GM13977 (cell line): ENCODE measurements at regions of chr12 and their contacts with region 1.

Region 1: GRCh38 chr12:76455582-76456345 is 103.8 kb downstream of the OSBPL8 start:
- DNase-seq: peak; percentile 47
- CTCF ChIP-seq: peak; percentile 64

Region 2: GRCh38 chr12:75511116-75512048 is 944.4 kb before region 1 on chr12 and contains the start of gene KRR1:
- in situ Hi-C with region 1: loop called (anchors 25 kb)
- DNase-seq: peak; percentile 49
- CTCF ChIP-seq: no peak

Region 3: DNA sequence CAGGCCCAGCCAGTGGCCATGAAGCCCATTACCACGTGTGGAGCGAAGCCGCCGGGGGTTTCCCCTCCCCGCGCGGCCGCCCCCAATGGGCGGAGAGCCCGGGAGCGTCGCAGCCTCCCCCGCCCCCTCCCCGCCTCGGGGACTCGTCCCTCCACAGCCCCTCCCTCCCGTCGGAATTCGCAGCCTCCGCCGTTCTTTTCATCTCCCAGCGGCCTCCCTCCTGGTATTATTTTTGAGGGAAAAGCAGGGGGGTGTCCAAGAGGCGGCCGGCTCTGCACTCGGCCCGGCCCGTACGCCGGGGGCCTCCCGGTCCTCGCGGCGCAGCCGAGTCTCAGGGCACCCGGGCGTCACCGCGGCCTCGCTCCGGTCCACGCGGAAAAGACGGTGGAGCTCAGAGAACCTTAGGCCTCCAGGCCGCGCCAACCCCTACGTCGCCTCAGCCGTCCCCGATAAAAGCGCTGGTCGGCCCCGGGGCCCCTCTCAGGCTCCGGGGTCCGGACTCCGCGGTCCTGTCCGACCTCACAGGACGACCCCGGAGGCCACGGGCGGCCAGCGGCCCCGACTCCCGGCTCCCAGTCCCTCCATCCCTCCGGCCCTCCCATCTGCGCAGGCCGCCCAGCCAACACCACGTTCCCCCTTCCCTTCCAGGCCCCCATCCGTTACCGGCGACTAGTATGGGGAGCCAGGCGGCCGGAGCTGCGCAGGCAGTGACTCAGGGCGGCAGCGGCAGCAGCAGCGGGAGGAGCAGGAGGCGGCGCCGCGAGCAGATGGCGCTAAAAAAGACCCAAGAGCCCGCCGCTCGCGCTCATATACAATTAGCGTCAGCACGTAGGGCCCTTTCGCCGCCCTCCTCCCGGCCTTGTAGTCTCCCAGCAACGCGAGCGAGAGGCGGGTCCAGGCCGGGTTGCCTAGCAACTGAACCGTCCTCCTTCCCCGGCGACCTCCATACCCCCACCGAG is 371.6 kb before region 1 on chr12 and contains the start of gene NAP1L1:
- in situ Hi-C with region 1: loop called (anchors 25 kb)
- DNase-seq: peak; percentile 98
- CTCF ChIP-seq: no peak

Region 4: GRCh38 chr12:76337583-76337982 is 118.2 kb before region 1 on chr12:
- in situ Hi-C with region 1: no loop called
- DNase-seq: no peak
- CTCF ChIP-seq: no peak

Region 5: DNA sequence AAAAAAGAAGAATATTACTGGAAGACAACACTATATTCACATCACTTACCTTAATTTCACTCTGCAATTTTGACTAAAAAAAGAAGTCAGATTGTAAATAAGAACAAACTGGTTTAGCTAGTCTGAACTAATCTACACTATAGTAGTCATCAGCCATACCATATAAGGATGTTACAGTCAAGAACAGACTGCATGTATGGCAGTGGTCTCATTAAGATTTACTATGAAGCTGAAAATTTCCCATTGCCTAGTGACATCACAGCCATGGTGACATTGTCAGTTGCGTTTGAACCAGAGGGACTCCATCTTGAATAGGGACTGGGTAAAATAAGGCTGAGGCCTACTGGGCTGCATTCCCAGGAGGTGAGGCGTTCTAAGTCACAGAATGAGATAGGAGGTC is 52.4 kb after region 1 on chr12:
- in situ Hi-C with region 1: no loop called
- DNase-seq: no peak
- CTCF ChIP-seq: no peak